HEK293 (cell line): ENCODE measurements at regions of chr11 and their contacts with region 1.

Region 1: DNA sequence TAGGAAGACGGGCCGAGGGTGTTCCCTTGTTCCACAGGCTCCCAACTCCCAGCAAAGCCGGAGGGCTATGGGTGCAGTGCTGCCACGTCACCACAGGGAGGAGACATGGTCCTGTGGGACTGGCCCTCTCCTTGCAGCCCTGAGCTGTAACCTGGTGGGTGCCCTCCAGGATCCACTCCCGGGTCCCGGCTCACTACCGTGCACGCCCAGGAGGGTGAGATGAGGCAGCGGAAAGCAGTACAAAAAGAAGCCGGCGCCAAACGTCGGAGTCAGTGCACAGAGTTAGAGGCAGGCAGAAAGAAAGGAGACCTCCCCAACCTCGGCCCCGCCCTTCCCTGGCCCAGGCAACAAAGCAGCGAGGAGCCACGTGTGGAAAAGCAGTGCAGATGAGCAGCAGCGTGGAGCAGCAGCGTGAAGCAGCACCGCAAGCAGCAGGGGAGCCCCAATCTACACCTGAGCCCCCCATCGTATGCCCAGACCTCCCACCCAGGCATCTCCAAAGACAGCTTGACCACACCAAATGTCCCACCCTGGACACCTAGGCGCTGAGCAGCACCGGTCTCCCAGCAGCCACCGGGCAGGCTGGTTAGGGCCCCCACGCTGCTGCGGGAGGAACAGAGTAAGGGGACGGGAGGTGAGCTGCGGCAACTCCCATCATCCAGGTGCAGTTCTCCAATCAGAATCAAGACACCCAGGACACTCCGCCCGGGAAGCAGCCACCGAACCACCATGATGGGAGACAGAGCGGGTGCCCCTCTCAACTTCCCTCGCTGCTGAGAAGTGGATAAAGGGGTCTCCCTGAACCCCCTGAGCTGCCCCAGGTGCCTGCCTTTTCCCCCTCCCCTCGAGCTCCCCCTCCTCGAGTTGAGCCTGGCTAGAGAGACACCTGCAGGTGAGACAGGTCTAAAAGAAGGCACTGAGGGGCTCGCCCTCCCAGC is 28.8 kb downstream of the IGSF9B start:
- H3K4me3 ChIP-seq: no peak overlapping the region
- H3K27ac ChIP-seq: no peak overlapping the region
- H3K4me1 ChIP-seq: no peaks in the 10 kb centered on the region
- CTCF ChIP-seq: peak; percentile 81

Region 2: DNA sequence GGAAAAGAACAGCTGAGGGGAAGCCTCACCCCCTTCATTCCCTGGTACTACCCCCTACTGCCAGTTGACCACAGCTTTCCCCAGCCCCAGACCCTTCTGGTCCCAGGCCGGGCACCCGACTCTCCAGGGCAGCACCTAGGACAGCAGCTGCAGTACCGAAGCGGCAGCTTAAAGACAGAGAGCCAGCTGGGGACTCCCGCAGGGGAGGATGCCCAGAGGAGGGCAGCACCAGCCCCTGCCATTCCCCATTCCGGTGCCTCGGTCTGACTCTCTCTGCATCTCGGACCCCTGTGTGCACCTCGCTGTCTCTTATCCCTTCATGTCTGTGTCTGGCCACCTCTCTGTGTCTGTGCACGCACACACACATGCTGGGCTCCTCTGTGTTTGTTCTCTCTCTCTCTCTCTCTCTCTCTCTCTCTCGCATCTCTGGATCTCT is 19.4 kb after region 1 on chr11:
- CTCF ChIA-PET with region 1: interaction called, 19 read pairs
- POLR2A ChIA-PET with region 1: no interaction called
- H3K4me3 ChIP-seq: no peak overlapping the region
- H3K27ac ChIP-seq: no peak overlapping the region
- H3K4me1 ChIP-seq: peaks cover 14% of the 10 kb centered on the region
- CTCF ChIP-seq: peak; percentile 59

Region 3: DNA sequence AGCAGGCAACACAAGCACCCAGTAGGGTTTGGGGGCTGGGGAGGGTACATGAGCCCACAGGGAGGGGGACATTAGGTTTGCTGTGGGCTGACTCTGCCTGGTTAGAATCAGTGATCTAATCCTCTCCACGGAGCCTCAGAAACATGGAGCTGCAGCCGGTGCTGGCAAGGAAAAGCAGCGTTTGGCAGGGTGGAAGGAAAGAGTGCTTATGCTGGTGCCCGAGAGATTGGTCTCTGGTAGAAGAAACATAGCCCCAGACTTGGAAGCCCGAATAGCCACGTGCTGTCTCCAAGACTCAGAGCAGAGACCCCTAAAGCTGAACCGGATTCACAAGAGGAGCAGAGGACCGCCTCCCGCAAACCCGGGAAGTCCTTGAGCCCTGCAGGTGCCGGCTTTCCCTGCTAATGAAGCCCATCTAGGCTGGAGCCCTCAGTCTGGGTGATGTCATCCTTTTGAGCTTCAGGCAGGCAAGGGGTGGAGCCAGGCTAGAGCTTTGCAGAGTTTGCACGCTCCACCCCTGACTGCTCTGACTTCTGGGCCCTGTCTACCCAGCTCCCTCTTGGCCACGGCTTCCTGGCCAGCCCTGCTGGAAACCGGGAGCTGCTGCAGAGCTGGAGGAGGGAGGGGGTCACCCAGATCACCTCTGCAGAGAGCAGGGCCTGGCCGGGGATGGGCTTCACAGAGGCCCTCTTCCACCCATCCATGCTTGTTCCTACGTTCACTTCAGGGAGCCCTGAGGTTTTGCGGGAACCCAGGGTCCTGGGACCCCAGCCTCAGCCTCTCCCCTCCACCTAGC is 105.9 kb after region 1 on chr11:
- CTCF ChIA-PET with region 1: interaction called, 10 read pairs
- POLR2A ChIA-PET with region 1: interaction called, 7 read pairs
- H3K4me3 ChIP-seq: no peak overlapping the region
- H3K27ac ChIP-seq: no peak overlapping the region
- H3K4me1 ChIP-seq: no peaks in the 10 kb centered on the region
- CTCF ChIP-seq: no peak

Region 4: GRCh38 chr11:134139873-134140331 is 211.9 kb after region 1 on chr11:
- CTCF ChIA-PET with region 1: interaction called, 18 read pairs
- POLR2A ChIA-PET with region 1: no interaction called
- H3K4me3 ChIP-seq: no peak overlapping the region
- H3K27ac ChIP-seq: no peak overlapping the region
- H3K4me1 ChIP-seq: no peaks in the 10 kb centered on the region
- CTCF ChIP-seq: 0 out of 2 replicates have a peak, but pooled peaks have one; percentile 45